Heart left ventricle (tissue), 16 donors: ENCODE measurements at regions of chr3 and their contacts with region 1.

Region 1: GRCh38 chr3:187164885-187165543 is 25.7 kb upstream of the RPL39L start:
- DNase-seq: peak in 1 of 5 donors; percentile 31
- ATAC-seq: peak in 3 of 4 donors; percentile 18 to 45 (median 35)
- H3K4me3 ChIP-seq: no peak overlapping the region
- H3K27ac ChIP-seq: no peak overlapping the region
- H3K4me1 ChIP-seq: peaks cover 0 to 25% (median 6%) of the 10 kb centered on the region in 12 donors
- H3K27me3 ChIP-seq: no peaks in the 10 kb centered on the region
- CTCF ChIP-seq: peak; percentile 54 to 87 (median 77)
- POLR2A ChIP-seq: no peak

Region 2: DNA sequence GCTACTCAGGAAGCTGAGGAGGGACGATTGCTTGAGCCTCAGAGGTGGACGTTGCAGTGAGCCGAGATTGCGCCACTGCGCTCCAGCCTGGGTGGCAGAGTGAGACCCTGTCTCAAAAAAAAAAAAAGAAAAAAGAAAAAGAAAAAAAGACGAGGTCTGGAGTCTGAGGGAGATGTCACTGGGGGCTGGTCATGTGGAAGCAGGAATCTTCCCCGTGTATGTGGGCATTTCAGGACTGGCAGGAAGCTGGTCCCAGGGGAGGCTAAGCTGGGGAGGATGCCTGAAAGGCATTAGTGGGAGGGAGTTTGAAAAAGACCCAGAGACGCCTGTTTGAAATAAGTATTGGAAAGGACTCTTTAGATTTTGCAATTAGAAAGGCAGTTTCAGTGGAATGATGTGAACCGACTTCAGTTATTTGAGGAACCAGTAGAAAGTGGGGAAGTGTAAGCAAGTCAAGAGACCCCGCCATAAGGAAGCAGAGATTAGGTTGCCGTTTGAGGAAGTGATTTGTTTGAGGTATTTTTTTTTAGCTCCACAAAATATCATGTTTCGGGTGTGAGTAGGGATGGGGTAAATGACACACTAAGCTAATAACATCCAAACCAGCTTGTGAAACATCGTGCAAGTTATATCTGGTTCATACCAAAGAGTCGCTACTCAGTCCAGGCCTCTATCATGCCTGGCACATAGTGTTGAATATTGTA is 179.2 kb before region 1 on chr3:
- intact Hi-C with region 1: loop called in 1 of 10 experiments (anchors 10 kb)
- DNase-seq: no peak
- ATAC-seq: peak in 3 of 4 donors; percentile 23 to 40 (median 33)
- H3K4me3 ChIP-seq: peak overlapping the region in 1 of 12 donors; percentile 26
- H3K27ac ChIP-seq: peak overlapping the region in 10 of 12 donors; percentile 6 to 86 (median 50)
- H3K4me1 ChIP-seq: peaks cover 0 to 67% (median 33%) of the 10 kb centered on the region in 12 donors
- H3K27me3 ChIP-seq: no peaks in the 10 kb centered on the region
- CTCF ChIP-seq: no peak
- POLR2A ChIP-seq: no peak

Region 3: GRCh38 chr3:187112934-187113793 is 51.9 kb before region 1 on chr3:
- intact Hi-C with region 1: loop called in 9 of 10 experiments (anchors 1 to 10 kb)
- DNase-seq: no peak
- ATAC-seq: no peak
- H3K4me3 ChIP-seq: no peak overlapping the region
- H3K27ac ChIP-seq: no peak overlapping the region
- H3K4me1 ChIP-seq: peaks cover 0 to 4% (median 0%) of the 10 kb centered on the region in 12 donors
- H3K27me3 ChIP-seq: no peaks in the 10 kb centered on the region
- CTCF ChIP-seq: peak; percentile 37 to 70 (median 60)
- POLR2A ChIP-seq: no peak